ENCODE measurements at regions of chr7 and their contacts with region 1.

Region 1: DNA sequence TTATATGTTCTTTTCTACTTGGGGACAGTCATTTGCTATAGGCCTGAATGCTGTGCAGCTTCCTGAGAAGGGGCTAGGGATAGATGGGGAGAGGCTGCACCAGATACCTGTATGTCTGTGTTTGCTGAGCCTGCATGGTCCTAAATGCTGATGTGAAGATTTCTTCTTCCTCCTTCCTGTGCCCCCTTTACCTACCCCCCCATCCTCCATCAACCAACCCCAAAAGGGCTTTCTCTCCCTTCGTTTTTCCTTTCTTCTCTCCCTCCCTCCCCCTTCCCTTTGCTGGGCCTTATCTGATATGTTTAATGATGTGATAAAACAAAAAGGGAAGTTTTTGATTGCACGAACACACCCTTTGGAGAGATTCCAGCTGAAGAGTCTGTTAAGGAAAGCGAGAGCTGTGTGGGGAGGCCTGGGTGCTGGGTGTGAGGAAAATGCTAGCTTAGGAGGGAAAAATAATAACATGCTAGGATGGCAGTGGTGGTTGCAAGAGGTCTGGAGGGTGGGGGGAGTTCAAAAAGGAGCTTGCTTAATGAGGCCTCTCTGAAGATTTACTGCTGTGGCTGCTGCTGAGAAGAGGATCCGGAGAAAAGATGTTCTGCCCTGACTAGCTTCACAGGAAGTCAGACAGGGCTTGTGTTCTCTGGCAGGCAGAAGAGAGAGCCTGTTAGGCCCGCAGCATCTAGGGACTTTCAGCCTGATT is 101.8 kb downstream of the SAMD9 start:
- DNase-seq: no peak
- H3K4me3 Mint-ChIP-seq: no peak overlapping the region
- H3K27ac Mint-ChIP-seq: peak overlapping the region; percentile 65
- H3K4me1 Mint-ChIP-seq: peaks cover 27% of the 10 kb centered on the region
- H3K27me3 Mint-ChIP-seq: no peaks in the 10 kb centered on the region

Region 2: GRCh38 chr7:92916674-92917224 is 99.2 kb before region 1 on chr7:
- intact Hi-C with region 1: no loop called
- DNase-seq: no peak
- H3K4me3 Mint-ChIP-seq: no peak overlapping the region
- H3K27ac Mint-ChIP-seq: no peak overlapping the region
- H3K4me1 Mint-ChIP-seq: no peaks in the 10 kb centered on the region
- H3K27me3 Mint-ChIP-seq: no peaks in the 10 kb centered on the region

Region 3: DNA sequence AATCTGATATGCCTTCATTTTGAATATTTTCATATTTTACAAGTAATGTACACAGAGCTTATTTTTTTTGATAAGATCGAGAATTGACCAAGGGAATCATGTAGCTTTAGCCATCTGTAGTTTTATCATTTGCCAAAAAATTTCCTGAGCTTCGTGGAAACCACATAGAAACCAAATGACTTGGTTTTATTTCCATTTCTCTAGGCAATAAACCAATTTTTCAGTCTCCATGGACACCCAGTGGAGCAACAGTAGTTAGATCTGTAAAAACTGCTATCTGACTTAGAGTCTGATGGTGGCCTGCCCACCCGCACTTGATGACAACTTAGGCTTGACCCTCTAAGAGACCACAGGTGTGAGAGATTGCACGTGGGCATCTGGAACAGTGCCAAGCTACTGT is 51.8 kb before region 1 on chr7:
- intact Hi-C with region 1: no loop called
- DNase-seq: no peak
- H3K4me3 Mint-ChIP-seq: no peak overlapping the region
- H3K27ac Mint-ChIP-seq: no peak overlapping the region
- H3K4me1 Mint-ChIP-seq: peaks cover 4% of the 10 kb centered on the region
- H3K27me3 Mint-ChIP-seq: peaks cover 3% of the 10 kb centered on the region

Region 4: DNA sequence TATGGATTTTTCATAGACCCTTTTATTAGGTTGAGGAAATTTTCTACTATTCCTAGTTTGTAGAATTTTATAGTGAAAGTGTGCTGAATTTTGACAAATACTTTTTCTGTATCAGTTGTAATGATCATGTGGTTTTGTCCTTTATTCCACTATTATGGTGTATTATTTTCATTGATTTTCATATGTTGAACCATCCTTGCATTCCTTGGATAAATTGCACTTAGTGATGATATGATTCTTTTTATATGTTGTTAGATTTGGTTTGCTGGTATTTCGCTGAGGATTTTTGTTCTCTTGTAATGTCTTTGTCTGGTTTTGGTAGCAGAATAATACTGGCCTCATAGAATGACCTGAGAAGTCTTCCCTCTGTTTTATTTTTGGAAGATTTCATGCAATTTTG is 39.0 kb before region 1 on chr7:
- intact Hi-C with region 1: loop called (anchors 5 kb)
- DNase-seq: no peak
- H3K4me3 Mint-ChIP-seq: no peak overlapping the region
- H3K27ac Mint-ChIP-seq: no peak overlapping the region
- H3K4me1 Mint-ChIP-seq: peaks cover 15% of the 10 kb centered on the region
- H3K27me3 Mint-ChIP-seq: no peaks in the 10 kb centered on the region

Region 5: GRCh38 chr7:93178212-93178611 is 162.3 kb after region 1 on chr7:
- intact Hi-C with region 1: no loop called
- DNase-seq: no peak
- H3K4me3 Mint-ChIP-seq: no peak overlapping the region
- H3K27ac Mint-ChIP-seq: no peak overlapping the region
- H3K4me1 Mint-ChIP-seq: no peaks in the 10 kb centered on the region
- H3K27me3 Mint-ChIP-seq: peaks cover 24% of the 10 kb centered on the region